ENCODE measurements at regions of chr12 and their contacts with region 1.

Region 1: GRCh38 chr12:88870000-88870737 is 289.9 kb upstream of the KITLG start:
- DNase-seq: no peak
- H3K4me3 ChIP-seq: no peak overlapping the region
- H3K27ac ChIP-seq: peak overlapping the region; percentile 23 to 49
- H3K4me1 ChIP-seq: peaks cover 0 to 3% of the 10 kb centered on the region in 2 donors
- H3K27me3 ChIP-seq: no peaks in the 10 kb centered on the region
- CTCF ChIP-seq: no peak
- POLR2A ChIP-seq: no peak

Region 2: GRCh38 chr12:89334548-89335203 is 464.5 kb after region 1 on chr12:
- intact Hi-C with region 1: loop called (anchors 5 kb)
- DNase-seq: no peak
- H3K4me3 ChIP-seq: no peak overlapping the region
- H3K27ac ChIP-seq: no peak overlapping the region
- H3K4me1 ChIP-seq: no peaks in the 10 kb centered on the region
- H3K27me3 ChIP-seq: no peaks in the 10 kb centered on the region
- CTCF ChIP-seq: no peak
- POLR2A ChIP-seq: no peak

Measured in breast epithelium (tissue), 4 donors.